GM13977 (cell line): ENCODE measurements at regions of chr6 and their contacts with region 1.

Region 1: GRCh38 chr6:29847871-29848630 is 20.4 kb downstream of the HLA-G start:
- DNase-seq: peak; percentile 74
- CTCF ChIP-seq: peak; percentile 97

Region 2: GRCh38 chr6:29676981-29677601 is 171.0 kb before region 1 on chr6:
- in situ Hi-C with region 1: no loop called
- DNase-seq: no peak
- CTCF ChIP-seq: no peak

Region 3: GRCh38 chr6:30006170-30007131 is 158.4 kb after region 1 on chr6:
- in situ Hi-C with region 1: loop called (anchors 10 kb)
- DNase-seq: peak; percentile 23
- CTCF ChIP-seq: no peak